ENCODE measurements at regions of chr9 and their contacts with region 1.

Region 1: DNA sequence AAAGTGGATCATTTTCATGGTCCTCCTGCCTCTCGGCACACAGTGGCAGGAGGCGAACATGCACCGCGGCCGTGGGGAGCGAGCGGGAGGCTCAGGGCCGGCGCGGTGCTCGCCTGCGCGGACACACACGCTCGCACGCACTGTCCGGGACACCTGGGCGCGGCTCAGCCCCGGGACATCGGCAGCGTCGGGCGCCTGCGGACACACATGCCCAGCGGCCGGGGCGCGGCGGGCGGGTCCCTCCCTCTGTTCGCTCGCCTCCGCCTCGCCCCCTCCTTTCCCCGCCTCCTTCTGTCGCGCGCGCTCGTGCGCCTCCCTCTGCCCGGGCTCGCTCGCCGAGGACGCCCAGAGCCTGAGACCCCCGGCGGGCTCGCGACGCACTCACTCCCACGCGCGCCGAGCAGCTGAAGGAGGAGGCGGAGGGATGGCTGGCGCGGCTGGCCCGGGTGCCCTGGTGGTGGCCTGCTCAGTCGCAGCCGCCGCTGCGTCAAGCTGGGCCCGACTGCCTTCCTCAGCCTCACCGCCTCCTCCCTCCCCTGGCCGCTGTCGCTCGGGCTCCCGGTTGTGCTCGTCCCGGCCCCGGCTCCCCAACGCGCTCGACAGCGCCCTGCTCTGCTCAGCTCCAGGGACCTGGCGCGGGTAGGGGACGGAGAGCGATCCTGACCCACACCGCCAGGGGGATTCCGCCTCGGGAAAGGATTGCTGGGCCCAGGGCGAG is at the start of gene FRMD3:
- DNase-seq: peak; percentile 88 to 95 (median 92)
- H3K4me3 ChIP-seq: peak within 1 kb of the TSS; percentile 19 to 91 (median 80)
- H3K27ac ChIP-seq: peak within 1 kb of the TSS; percentile 3 to 94 (median 84)
- H3K4me1 ChIP-seq: peaks cover 0 to 14% of the 10 kb centered on the region in 2 donors
- H3K27me3 ChIP-seq: no peaks in the 10 kb centered on the region
- CTCF ChIP-seq: peak; percentile 75 to 93 (median 89)
- POLR2A ChIP-seq: peak; percentile 42 to 70
- total RNA-seq, gene FRMD3: 2.2 to 32.9 (median 17.0) TPM

Region 2: DNA sequence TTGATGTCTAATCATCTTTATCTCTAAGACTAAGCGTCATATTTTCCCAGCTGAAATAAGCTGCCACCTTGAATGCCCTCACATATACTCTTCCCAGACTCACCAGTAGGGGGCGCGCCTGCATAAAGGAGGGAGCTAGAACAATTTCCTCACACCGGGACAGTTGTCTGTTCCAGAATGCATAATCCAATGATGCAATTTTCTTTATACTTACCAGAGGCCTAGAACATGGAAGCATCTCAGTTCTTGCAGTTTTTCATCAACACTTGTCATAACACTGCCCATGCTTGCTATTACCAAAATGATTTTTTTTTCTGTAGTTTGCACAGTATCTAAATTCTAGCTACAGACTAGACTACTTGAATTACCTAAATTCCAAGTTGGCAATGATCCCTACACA is 204.0 kb before region 1 on chr9:
- intact Hi-C with region 1: loop called (anchors 5 kb)
- DNase-seq: peak; percentile 88 to 96 (median 92)
- H3K4me3 ChIP-seq: no peak overlapping the region
- H3K27ac ChIP-seq: peak overlapping the region in 1 of 5 donors; percentile 11
- H3K4me1 ChIP-seq: peaks cover 0 to 8% of the 10 kb centered on the region in 2 donors
- H3K27me3 ChIP-seq: no peaks in the 10 kb centered on the region
- CTCF ChIP-seq: peak; percentile 96 to 99 (median 98)
- POLR2A ChIP-seq: no peak

Region 3: GRCh38 chr9:83432104-83432639 is 106.2 kb before region 1 on chr9:
- intact Hi-C with region 1: loop called in 1 of 2 experiments (anchors 10 kb)
- DNase-seq: peak; percentile 89 to 98 (median 96)
- H3K4me3 ChIP-seq: no peak overlapping the region
- H3K27ac ChIP-seq: peak overlapping the region; percentile 70 to 94 (median 78)
- H3K4me1 ChIP-seq: peaks cover 27 to 46% of the 10 kb centered on the region in 2 donors
- H3K27me3 ChIP-seq: no peaks in the 10 kb centered on the region
- CTCF ChIP-seq: peak in 1 of 6 experiments; percentile 2
- POLR2A ChIP-seq: peak in 1 of 2 donors; percentile 22

Region 4: GRCh38 chr9:83722686-83723085 is 184.4 kb after region 1 on chr9:
- intact Hi-C with region 1: no loop called
- DNase-seq: no peak
- H3K4me3 ChIP-seq: no peak overlapping the region
- H3K27ac ChIP-seq: no peak overlapping the region
- H3K4me1 ChIP-seq: no peaks in the 10 kb centered on the region
- H3K27me3 ChIP-seq: no peaks in the 10 kb centered on the region
- CTCF ChIP-seq: no peak
- POLR2A ChIP-seq: no peak